ENCODE measurements at regions of chr1 and their contacts with region 1.

Region 1: DNA sequence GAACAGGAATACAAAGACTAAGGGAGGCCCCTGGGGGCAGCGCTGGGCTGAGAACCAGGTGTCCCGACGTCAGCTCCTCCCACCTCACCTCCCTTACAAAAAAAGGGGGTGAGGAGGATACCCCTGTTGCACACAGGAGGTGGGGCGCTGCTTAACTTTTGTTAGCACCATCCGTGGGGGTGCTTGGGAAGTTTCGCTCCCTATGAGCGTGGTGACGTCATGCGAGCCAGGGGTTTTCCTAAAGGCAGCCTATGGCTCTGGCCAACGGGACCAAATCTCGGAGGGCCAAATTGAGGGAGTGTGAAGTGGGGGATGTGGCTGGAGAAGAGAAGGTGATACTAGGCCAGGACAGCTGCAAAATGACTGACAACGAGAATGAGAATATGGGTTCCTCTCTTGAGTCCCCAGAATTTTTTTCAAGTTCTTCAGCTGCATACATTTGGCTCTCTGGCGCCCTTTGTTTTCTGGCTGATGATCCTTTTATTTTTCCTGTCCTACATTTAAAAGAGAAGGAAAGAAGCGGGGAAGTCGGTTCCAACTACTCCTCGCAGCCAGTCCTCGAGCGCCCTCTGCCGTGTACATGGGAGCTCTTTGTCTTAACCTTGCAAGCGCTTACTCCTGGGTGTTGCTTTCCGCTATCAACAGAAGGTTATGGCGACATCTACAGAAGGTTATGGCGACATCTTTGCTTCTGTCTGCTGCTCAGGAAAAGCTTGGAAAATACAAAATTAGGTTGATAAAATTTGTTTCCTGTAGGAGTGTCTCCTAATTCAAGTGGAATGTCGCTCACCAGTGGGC is 48.0 kb upstream of the ZC3H11B start:
- DNase-seq: peak; percentile 92
- ATAC-seq: peak; percentile 88

Region 2: DNA sequence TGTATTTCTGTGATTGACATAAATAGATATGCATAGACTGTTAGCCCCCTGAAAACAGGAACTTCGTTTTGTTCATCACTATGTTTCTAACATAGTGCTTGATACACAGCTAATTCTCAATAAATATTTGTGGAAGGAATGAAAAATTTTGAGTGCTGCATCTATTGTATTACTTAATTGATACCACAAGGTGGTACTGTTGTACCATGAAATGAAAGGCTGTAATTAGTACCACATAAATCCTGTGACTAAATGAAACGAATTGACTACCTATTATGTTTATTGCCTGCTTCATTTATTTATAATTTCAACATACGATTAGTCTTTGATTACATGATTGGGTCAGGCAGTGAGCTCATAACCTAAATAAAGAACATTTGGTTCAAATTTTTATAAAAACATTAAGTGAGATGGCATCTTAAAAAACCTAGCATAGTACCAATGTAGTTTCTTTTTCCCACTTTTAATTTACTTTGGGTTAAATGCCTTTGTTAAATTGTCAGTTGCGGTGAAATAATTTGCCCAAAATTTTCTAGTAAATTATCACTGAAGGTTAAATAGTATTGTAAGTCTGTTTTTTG is 1330.7 kb before region 1 on chr1:
- intact Hi-C with region 1: loop called (anchors 10 kb)
- DNase-seq: no peak
- ATAC-seq: no peak

Region 3: DNA sequence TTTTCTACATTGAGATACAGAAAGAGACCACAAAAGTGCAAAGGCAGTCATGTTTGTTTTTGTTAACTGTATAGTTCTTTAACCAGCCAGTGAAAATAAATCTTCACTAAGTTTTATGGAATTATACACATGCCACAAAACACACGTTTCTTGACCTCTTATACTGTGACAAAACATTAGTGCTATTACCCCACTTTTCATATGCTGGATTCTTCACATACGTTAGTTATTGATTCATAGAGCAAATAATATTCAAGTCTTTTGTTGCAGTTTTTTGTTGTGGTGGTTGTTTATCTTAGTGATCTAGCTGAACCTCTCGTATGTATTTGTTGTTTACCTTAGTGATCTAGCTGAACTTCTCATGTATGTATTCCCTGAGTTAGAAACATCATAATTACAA is 459.2 kb before region 1 on chr1:
- intact Hi-C with region 1: loop called (anchors 5 kb)
- DNase-seq: no peak
- ATAC-seq: no peak

Region 4: GRCh38 chr1:219582296-219582695 is 78.6 kb before region 1 on chr1:
- intact Hi-C with region 1: loop called (anchors 5 kb)
- DNase-seq: no peak
- ATAC-seq: no peak

Region 5: GRCh38 chr1:219812491-219813203 is 151.8 kb after region 1 on chr1:
- intact Hi-C with region 1: loop called (anchors 5 kb)
- DNase-seq: no peak
- ATAC-seq: peak; percentile 83